Right cardiac atrium (tissue), 5 donors: ENCODE measurements at regions of chr9 and their contacts with region 1.

Region 1: DNA sequence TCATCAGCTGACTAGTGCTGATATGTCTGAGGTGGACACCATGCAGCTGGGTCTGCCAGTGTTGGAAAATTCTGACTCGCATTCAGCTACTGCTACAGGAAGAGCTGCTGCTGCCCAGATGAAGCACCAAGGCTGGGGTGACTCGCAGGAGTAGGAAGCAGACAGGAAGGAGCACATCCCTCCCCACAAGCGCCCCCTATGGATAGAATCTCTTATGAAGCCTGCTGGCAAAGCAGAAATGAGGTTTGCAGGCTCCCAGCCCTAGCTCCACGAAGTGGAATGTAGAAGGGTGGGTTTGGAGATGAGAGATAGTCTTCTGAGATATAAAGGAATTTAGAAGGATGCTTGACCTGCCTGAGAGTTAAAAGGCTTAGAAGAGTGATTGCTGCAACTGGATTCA is 443.0 kb downstream of the ACTL7B start:
- DNase-seq: peak in 1 of 3 donors; percentile 16
- ATAC-seq: peak in 1 of 2 donors; percentile 23
- H3K4me3 ChIP-seq: no peak overlapping the region
- H3K27ac ChIP-seq: no peak overlapping the region
- H3K4me1 ChIP-seq: no peaks in the 10 kb centered on the region
- H3K27me3 ChIP-seq: no peaks in the 10 kb centered on the region

Region 2: GRCh38 chr9:108125625-108126024 is 287.1 kb before region 1 on chr9:
- intact Hi-C with region 1: no loop called
- DNase-seq: peak in 2 of 3 donors; percentile 51 to 54
- ATAC-seq: no peak
- H3K4me3 ChIP-seq: no peak overlapping the region
- H3K27ac ChIP-seq: no peak overlapping the region
- H3K4me1 ChIP-seq: no peaks in the 10 kb centered on the region
- H3K27me3 ChIP-seq: no peaks in the 10 kb centered on the region

Region 3: GRCh38 chr9:108743901-108744371 is 331.2 kb after region 1 on chr9:
- intact Hi-C with region 1: loop called in 1 of 4 experiments (anchors 10 kb)
- DNase-seq: peak in 1 of 3 donors; percentile 36
- ATAC-seq: peak; percentile 29 to 31
- H3K4me3 ChIP-seq: no peak overlapping the region
- H3K27ac ChIP-seq: no peak overlapping the region
- H3K4me1 ChIP-seq: no peaks in the 10 kb centered on the region
- H3K27me3 ChIP-seq: no peaks in the 10 kb centered on the region